Activated CD4-positive, alpha-beta memory T cell treated with anti-CD3 and anti-CD28 coated beads, Interleukin-2, amount 10 ng/mL, durations not matched to agents 7 days and 5 days (primary cell): ENCODE measurements at regions of chr7 and their contacts with region 1.

Region 1: GRCh38 chr7:148575640-148576411 is 14.7 kb upstream of the C7orf33 start:
- DNase-seq: peak; percentile 76
- H3K4me3 Mint-ChIP-seq: no peak overlapping the region
- H3K27ac Mint-ChIP-seq: no peak overlapping the region
- H3K4me1 Mint-ChIP-seq: peaks cover 7% of the 10 kb centered on the region
- H3K27me3 Mint-ChIP-seq: peaks cover 15% of the 10 kb centered on the region

Region 2: GRCh38 chr7:148563583-148564274 is 12.1 kb before region 1 on chr7:
- CTCF ChIA-PET with region 1: interaction called, 36 read pairs
- POLR2A ChIA-PET with region 1: interaction called, 4 read pairs
- DNase-seq: no peak
- H3K4me3 Mint-ChIP-seq: peak overlapping the region; percentile 29
- H3K27ac Mint-ChIP-seq: peak overlapping the region; percentile 89
- H3K4me1 Mint-ChIP-seq: peaks cover 28% of the 10 kb centered on the region
- H3K27me3 Mint-ChIP-seq: peaks cover 12% of the 10 kb centered on the region

Region 3: DNA sequence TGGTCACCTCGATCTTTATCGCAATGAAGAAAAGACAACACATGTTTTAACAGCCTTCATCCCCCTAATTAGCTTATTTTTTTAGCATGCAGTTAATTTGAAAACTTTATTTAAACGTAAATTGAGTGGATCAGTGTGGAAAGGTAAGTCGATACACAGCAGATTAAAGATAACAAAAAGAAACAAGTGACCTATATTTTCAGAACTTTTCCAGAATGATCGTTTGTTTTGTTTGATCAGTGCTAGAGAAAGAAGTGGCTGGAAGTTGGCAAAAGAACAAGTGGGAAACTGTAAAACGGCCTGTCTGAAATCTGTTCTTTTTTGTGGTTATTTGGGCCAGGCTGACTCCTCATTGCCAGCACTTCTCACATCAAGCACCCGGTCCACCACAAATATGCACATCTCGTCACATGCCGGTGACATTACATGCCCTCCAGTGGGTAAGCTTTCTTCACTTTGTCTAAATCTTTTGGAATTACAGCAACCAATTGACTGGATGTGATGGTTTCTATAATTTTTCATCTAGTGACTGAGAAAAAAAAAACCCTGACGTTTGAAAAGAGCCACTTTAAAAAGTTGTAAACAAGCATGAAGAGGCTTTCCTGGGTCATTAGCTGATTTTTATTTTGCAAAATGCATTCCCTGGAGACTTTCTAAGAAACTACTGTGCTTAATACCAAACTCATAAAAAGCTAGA is 47.9 kb after region 1 on chr7:
- CTCF ChIA-PET with region 1: interaction called, 12 read pairs
- POLR2A ChIA-PET with region 1: no interaction called
- DNase-seq: no peak
- H3K4me3 Mint-ChIP-seq: no peak overlapping the region
- H3K27ac Mint-ChIP-seq: no peak overlapping the region
- H3K4me1 Mint-ChIP-seq: peaks cover 31% of the 10 kb centered on the region
- H3K27me3 Mint-ChIP-seq: peaks cover 33% of the 10 kb centered on the region

Region 4: GRCh38 chr7:148773334-148773733 is 197.5 kb after region 1 on chr7:
- CTCF ChIA-PET with region 1: interaction called, 11 read pairs
- POLR2A ChIA-PET with region 1: no interaction called
- DNase-seq: peak; percentile 72
- H3K4me3 Mint-ChIP-seq: peak overlapping the region; percentile 21
- H3K27ac Mint-ChIP-seq: peak overlapping the region; percentile 85
- H3K4me1 Mint-ChIP-seq: peaks cover 31% of the 10 kb centered on the region
- H3K27me3 Mint-ChIP-seq: no peaks in the 10 kb centered on the region

Region 5: DNA sequence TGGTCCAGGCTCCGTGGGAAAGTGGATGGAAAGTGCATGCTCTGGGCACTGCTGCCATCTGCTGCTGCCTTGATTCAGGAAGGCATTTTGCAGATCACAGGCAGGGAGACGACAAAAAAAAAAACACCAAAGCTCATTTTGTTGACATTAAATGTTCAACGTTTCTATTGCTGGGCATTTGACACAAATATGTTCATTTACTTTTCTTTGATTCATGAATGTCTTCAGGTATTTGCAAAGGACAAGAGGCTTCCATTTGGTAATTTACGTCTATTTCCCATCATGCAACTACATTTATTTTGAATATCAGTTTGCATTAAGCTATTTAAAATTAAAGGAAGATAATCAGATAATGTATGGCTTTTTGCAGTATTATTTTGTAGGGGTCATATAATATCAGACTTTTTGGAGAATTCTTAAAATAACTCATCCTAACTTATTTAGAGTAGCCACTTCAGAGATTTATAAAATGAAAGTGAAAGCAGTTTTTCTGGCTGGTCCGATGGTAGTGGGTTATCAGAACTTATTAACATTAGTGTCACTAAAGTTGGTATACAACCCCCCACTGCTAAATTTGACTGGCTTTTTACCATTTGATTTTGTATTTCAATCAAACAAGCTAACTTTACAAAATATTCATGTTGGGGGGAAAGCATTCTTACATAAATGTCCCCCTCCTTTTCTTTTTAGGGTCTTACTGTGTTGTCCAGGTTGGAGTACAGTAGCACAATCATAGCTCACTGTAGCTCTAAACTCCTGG is 387.2 kb after region 1 on chr7:
- CTCF ChIA-PET with region 1: interaction called, 47 read pairs
- POLR2A ChIA-PET with region 1: interaction called, 6 read pairs
- DNase-seq: peak; percentile 72
- H3K4me3 Mint-ChIP-seq: peak overlapping the region; percentile 85
- H3K27ac Mint-ChIP-seq: peak overlapping the region; percentile 74
- H3K4me1 Mint-ChIP-seq: peaks cover 28% of the 10 kb centered on the region
- H3K27me3 Mint-ChIP-seq: peaks cover 3% of the 10 kb centered on the region